ENCODE measurements at regions of chrX and their contacts with region 1.

Region 1: GRCh38 chrX:18984381-18985185 is 669 bp upstream of the PHKA2 start:
- DNase-seq: peak; percentile 74
- H3K4me3 Mint-ChIP-seq: peak overlapping the region; percentile 85
- H3K27ac Mint-ChIP-seq: peak overlapping the region; percentile 87
- H3K4me1 Mint-ChIP-seq: peaks cover 6% of the 10 kb centered on the region
- H3K27me3 Mint-ChIP-seq: no peaks in the 10 kb centered on the region

Region 2: GRCh38 chrX:17736856-17737706 is 1247.5 kb before region 1 on chrX and contains the start of gene SCML1:
- intact Hi-C with region 1: loop called (anchors 1 kb)
- DNase-seq: peak; percentile 75
- H3K4me3 Mint-ChIP-seq: peak within 1 kb of the TSS; percentile 80
- H3K27ac Mint-ChIP-seq: peak within 1 kb of the TSS; percentile 79
- H3K4me1 Mint-ChIP-seq: peaks cover 20% of the 10 kb centered on the region
- H3K27me3 Mint-ChIP-seq: peaks cover 34% of the 10 kb centered on the region
- total RNA-seq, gene SCML1: 1.1 and 1.4 TPM in 2 replicates

Region 3: GRCh38 chrX:18886344-18887161 is 98.0 kb before region 1 on chrX:
- intact Hi-C with region 1: loop called (anchors 1 kb)
- DNase-seq: peak; percentile 12
- H3K4me3 Mint-ChIP-seq: peak overlapping the region; percentile 85
- H3K27ac Mint-ChIP-seq: peak overlapping the region; percentile 85
- H3K4me1 Mint-ChIP-seq: peaks cover 19% of the 10 kb centered on the region
- H3K27me3 Mint-ChIP-seq: peaks cover 2% of the 10 kb centered on the region

Region 4: DNA sequence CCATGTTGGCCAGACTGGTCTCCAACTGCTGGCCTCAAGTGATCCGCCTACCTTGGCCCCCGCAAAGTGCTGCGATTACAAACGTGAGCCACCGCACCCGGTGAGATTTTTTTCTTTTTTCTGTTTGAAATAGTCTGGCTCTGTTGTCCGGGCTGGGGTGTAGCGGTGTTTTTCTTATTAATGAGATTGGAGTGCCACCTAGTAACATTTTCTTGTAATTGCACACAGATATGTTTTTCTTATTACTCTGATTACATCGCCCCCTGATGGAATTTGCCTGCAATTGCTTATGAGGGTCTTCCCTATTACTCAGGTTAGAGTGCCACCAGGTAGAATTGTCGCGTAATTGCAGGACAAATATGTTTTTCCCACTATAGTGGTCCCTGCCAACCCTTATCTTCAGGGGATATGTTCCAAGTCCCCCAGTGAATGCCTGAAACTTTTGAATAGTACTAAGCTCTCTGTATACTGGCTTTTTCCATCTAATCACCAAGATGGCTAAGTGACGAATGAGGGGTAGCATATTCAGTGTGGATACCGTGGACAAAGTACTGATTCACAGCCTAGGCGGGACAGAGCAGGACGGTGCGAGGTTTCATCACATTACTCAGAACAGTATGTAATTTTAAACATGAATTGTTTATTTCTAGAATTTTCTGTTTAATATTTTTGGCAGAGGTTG is 350.5 kb after region 1 on chrX:
- intact Hi-C with region 1: loop called (anchors 1 kb)
- DNase-seq: peak; percentile 0
- H3K4me3 Mint-ChIP-seq: no peak overlapping the region
- H3K27ac Mint-ChIP-seq: no peak overlapping the region
- H3K4me1 Mint-ChIP-seq: no peaks in the 10 kb centered on the region
- H3K27me3 Mint-ChIP-seq: peaks cover 2% of the 10 kb centered on the region

Region 5: DNA sequence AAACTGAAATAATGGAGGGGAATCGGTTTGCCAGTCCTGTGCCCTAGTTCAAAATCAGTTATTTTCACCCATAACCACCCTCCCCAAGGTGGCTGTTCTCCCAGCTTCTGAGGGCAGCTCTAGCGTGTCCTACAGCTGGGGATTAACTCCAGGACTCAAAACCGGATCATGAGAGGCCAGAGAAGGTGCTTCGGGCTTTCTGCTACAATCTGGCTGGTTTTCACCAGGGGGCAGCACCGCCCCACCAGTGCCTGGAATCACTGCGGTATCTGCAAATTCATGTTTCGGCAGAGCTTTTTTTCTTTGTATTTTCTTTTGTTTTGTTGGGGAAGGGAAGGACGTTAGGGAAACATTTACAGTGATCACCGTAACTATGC is 387.6 kb after region 1 on chrX:
- intact Hi-C with region 1: loop called (anchors 1 kb)
- DNase-seq: peak; percentile 34
- H3K4me3 Mint-ChIP-seq: peak overlapping the region; percentile 87
- H3K27ac Mint-ChIP-seq: peak overlapping the region; percentile 85
- H3K4me1 Mint-ChIP-seq: peaks cover 9% of the 10 kb centered on the region
- H3K27me3 Mint-ChIP-seq: peaks cover 2% of the 10 kb centered on the region

Measured in activated T-helper 1 cell treated with anti-CD3 and anti-CD28 coated beads, Interleukin-12 subunit alpha, Interleukin-12 subunit beta, Interleukin-2, Interleukin-4 antibody, amounts not matched to agents 30 ng/mL and 10 ng/mL and 1 ng/mL, durations not matched to agents 14 hours and 24 hours and 36 hours (primary cell).